Right cardiac atrium (tissue), 5 donors: ENCODE measurements at regions of chr12 and their contacts with region 1.

Region 1: GRCh38 chr12:70719672-70720420 is 82.6 kb upstream of the PTPRB start:
- DNase-seq: peak; percentile 44 to 72 (median 67)
- ATAC-seq: peak; percentile 72 to 79
- H3K4me3 ChIP-seq: peak overlapping the region; percentile 30
- H3K27ac ChIP-seq: peak overlapping the region; percentile 85
- H3K4me1 ChIP-seq: no peaks in the 10 kb centered on the region
- H3K27me3 ChIP-seq: no peaks in the 10 kb centered on the region

Region 2: DNA sequence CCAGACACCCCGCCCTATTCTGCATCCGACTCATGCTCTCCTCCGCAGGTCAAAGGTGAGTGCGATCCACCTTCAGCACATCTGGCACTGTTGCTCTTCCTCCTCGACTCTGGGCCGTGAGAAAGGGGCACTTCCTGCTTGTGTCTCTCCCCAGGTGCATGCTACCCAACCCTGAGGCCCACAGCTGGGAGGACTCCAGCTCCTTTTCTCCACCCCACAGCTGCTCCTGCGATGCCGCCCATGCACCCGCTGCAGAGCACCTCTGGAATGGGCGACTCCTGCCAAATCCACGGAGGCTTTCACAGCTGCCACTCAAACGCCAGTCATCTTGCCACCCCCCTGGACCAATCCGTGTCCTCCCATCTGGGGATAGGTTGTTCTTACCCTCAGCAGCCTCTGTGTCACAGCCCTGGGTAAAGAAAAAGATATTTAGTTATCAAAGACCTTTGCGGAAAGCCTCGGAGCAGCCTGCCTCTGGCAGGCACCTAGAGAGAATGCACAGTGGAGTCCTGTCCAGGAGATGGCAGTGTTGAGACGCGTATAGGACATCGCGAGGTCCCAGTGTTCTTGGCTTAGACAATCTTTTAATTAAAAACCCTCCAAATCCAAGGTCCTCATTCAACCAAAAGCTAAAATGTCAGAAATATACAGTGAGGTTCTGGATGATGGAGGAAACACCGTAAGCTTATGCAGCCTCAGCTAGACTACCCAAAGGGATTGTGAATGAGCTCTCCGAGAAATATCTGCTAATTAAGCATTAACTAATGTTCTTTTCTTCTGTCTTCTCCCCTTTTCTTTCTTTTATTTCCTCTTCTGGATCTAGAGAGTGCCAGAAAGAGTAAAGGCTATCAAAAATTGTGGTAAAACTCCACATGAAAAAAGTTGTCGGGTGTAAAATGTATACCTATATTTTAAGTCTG is 840.5 kb before region 1 on chr12:
- intact Hi-C with region 1: loop called in 1 of 4 experiments (anchors 10 kb)
- DNase-seq: peak; percentile 67 to 87 (median 76)
- ATAC-seq: peak; percentile 92 to 95
- H3K4me3 ChIP-seq: peak overlapping the region; percentile 46
- H3K27ac ChIP-seq: no peak overlapping the region
- H3K4me1 ChIP-seq: peaks cover 1% of the 10 kb centered on the region
- H3K27me3 ChIP-seq: no peaks in the 10 kb centered on the region

Region 3: GRCh38 chr12:70590051-70590450 is 129.8 kb before region 1 on chr12:
- intact Hi-C with region 1: loop called (anchors 5 kb)
- DNase-seq: peak; percentile 67 to 89 (median 81)
- ATAC-seq: peak; percentile 71 to 89
- H3K4me3 ChIP-seq: no peak overlapping the region
- H3K27ac ChIP-seq: no peak overlapping the region
- H3K4me1 ChIP-seq: no peaks in the 10 kb centered on the region
- H3K27me3 ChIP-seq: no peaks in the 10 kb centered on the region